Sciatic nerve (tissue), 2 donors: ENCODE measurements at regions of chr7 and their contacts with region 1.

Region 1: DNA sequence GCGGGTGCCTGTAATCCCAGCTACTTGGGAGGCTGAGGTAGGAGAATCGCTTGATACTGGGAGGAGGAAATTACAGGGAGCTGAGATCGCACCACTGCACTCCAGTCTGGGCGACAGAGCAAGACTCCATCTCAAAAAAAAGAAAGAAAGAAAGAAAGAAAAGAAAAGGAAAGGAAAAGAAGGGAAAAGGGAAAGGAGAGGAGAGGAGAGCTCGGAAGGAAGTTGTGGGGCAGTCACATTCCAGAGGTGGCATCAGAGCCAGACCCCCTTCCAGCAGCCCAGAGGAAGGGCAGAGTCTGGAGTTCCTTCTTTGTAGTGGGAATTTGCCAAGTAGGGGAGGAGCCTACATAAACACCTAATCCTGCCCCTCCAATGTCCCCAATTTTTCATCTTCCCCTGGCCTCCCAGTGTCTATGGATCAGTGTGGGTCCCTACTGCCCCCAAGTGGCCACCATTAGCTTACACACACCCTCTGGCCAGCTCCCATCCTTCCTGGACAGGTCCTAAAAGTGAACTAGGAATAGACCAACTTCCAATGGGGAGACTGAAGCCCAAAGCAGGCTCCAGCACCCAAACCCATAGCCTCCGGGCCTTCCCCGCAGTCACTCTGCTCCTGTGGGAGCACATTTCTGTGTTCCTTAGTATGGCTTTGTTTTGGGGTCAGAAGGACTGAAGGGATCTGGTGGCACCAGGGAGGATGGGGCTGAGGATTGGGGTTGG is 39.6 kb upstream of the HSPB1 start:
- DNase-seq: no peak
- ATAC-seq: peak; percentile 56

Region 2: DNA sequence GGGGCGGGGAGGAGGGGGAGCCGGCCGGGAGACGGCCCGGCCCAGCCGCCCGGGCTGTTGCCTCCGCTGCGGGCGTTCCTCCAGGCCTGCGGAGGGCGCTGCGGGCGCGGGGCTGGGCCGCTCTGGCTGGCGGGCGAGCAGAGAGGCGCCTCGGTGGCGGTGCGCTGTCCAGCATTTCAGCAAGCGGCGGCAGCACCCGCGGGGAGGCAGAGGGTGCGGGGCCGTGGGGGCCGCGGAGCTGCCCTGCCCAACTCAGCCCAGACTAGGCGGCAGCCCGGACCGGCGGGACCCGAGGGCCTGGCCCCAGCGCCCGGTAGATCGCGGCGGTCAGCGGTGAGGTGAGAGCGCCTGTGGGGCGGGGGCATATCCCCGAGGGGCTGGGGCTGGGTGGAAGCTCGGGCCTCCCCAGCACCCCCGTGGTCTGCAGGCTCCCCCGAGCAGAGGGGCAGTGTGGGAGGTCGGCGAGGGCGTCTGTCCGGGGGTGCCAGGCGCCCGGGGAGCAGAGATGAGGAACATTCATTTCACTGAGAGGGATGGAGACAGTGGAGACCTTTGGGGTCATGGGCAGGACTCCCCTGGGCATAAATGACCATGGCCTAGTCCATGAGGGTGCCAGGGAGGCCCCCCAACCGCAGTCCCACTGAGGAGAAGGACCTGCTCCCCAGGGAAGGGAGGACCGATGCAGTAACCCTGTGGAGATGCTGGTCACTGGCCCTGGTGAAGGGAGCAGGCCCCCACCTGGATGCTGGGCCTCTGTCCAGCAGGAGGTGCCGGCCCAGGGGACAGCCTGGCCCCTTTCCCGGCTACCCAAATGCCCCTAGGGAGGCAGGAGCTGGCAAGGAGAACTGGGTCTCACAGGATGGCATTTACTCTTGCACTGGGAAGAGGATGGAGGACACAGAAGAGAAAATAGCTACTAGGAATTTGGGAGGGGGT is 60.8 kb before region 1 on chr7 and contains the start of gene SRRM3:
- intact Hi-C with region 1: loop called (anchors 10 kb)
- DNase-seq: peak; percentile 81
- ATAC-seq: peak; percentile 76
- total RNA-seq, gene SRRM3: 2.9 TPM